ENCODE measurements at regions of chr12 and their contacts with region 1.

Region 1: DNA sequence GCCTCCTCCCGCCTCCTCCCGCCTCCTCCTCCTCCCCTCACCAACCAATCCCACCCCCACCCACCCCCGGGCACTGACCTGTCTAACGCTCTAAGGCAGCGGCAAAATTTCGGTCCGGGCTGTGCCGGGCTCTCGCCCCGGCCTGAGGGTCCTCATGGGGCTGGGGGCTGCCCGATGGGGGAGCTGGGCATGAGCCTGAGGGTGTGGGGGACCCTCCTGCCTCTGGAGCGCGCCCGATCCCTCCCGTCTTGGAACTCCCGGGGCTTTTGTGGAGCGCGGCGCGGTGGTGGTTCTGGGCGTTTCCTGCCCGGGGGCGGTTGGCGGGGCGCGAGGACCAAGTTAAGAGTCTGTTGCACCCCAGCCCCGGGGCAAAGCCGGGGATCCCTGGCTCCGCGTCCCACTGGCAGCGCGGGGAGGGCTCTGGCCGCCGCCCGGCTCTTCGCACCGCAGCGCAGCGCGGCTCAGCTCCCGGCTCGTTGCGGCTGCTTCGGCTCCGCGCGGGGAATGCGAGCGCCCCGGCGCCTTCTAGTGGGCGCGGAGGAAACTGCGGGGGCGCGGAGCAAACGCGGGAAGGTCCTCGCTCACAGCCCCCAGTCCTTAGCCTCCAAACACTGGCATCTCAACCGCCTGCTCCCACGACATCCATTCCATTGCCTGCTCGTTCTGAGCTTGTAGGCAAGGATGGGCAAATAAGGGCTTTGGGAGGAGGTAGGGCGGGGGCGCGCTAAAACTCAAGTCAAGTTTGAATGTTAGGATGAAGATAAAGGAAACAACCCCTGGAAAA is at the start of gene B4GALNT1:
- DNase-seq: peak; percentile 80 to 83 (median 82)
- ATAC-seq: peak; percentile 94
- H3K4me3 ChIP-seq: peak within 1 kb of the TSS; percentile 79
- H3K27ac ChIP-seq: peak within 1 kb of the TSS; percentile 83
- H3K4me1 ChIP-seq: peaks cover 0 to 29% of the 10 kb centered on the region in 2 experiments; a peak in 3 of 5 replicates
- H3K27me3 ChIP-seq: no peaks in the 10 kb centered on the region
- CTCF ChIP-seq: peak; percentile 89 to 95 (median 92)
- EP300 ChIP-seq: no peak
- POLR2A ChIP-seq: peak; percentile 71
- RAD21 ChIP-seq: peak; percentile 66 to 77
- polyA plus RNA-seq, gene B4GALNT1: 1.0 to 1.7 TPM

Region 2: DNA sequence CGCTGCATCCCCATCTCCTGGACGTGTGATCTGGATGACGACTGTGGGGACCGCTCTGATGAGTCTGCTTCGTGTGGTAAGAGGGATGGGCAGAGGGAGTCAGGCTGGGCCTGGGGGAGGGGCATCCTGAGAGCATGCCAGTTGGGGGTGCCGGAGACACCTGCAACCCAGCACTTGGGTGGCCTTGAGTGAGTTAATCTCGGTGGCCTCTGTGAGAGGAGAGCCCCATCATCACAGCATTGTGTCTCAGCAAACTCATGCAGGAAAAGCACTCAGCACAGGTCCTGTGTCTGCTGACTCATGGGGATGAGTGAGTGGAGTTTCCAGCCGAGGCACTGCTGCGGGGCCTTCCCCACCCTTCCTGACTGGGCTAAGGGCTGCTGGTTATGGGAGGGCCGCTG is 465.9 kb before region 1 on chr12:
- CTCF ChIA-PET with region 1: no interaction called
- POLR2A ChIA-PET with region 1: no interaction called
- in situ Hi-C with region 1: no loop called
- intact Hi-C with region 1: no loop called
- DNase-seq: peak; percentile 45 to 57 (median 48)
- ATAC-seq: peak; percentile 69
- H3K4me3 ChIP-seq: no peak overlapping the region
- H3K27ac ChIP-seq: no peak overlapping the region
- H3K4me1 ChIP-seq: peaks cover 0 to 22% of the 10 kb centered on the region in 2 experiments; a peak in 2 of 5 replicates
- H3K27me3 ChIP-seq: peaks cover 13 to 55% of the 10 kb centered on the region in 2 experiments; a peak in 4 of 5 replicates
- CTCF ChIP-seq: no peak
- EP300 ChIP-seq: no peak
- POLR2A ChIP-seq: no peak
- RAD21 ChIP-seq: no peak

Region 3: DNA sequence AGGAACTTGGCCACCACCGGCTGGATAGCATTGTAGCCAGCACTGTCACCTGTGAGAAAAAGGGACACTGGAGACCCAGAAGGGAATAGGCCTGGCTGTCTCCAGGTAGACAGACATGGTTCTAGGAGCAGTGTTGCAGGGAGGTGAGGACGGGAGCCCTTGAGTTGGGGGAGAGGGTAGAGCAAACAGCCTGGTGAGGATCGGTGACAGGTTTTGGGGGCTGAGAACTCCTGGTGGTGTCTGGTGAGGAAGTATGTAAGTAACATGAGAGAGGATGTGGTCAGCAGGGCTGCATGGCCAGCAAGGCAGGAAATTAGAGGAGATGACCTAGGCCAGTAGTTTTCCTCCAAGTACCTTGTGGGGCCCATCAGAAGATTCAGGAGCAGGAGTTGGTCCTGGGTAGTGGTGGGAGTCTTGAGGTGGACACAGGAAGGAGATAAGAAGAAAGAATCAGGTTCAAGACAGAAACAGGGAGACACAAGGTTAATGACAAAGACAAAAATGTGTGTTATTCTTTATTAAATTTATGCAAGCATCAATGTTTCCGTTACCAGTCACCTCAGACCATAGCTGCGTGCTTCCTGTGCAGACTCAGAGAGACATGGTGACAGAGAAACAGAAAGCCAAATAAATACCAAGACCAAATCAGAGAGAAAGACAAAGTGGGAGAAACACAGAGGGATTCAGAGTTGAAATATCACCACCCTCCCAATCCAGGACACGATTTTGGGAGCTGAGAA is 153.3 kb before region 1 on chr12 and contains the start of gene ARHGAP9:
- CTCF ChIA-PET with region 1: no interaction called
- POLR2A ChIA-PET with region 1: no interaction called
- in situ Hi-C with region 1: no loop called
- intact Hi-C with region 1: no loop called
- DNase-seq: no peak
- ATAC-seq: no peak
- H3K4me3 ChIP-seq: no peak within 1 kb of the TSS
- H3K27ac ChIP-seq: peak within 1 kb of the TSS; percentile 61; the same call in 2 of the 3 replicates
- H3K4me1 ChIP-seq: peaks cover 32 to 47% of the 10 kb centered on the region in 2 experiments
- H3K27me3 ChIP-seq: no peaks in the 10 kb centered on the region
- CTCF ChIP-seq: no peak
- EP300 ChIP-seq: no peak
- POLR2A ChIP-seq: no peak
- RAD21 ChIP-seq: no peak
- polyA plus RNA-seq, gene ARHGAP9: 1.5 to 2.0 TPM

Region 4: DNA sequence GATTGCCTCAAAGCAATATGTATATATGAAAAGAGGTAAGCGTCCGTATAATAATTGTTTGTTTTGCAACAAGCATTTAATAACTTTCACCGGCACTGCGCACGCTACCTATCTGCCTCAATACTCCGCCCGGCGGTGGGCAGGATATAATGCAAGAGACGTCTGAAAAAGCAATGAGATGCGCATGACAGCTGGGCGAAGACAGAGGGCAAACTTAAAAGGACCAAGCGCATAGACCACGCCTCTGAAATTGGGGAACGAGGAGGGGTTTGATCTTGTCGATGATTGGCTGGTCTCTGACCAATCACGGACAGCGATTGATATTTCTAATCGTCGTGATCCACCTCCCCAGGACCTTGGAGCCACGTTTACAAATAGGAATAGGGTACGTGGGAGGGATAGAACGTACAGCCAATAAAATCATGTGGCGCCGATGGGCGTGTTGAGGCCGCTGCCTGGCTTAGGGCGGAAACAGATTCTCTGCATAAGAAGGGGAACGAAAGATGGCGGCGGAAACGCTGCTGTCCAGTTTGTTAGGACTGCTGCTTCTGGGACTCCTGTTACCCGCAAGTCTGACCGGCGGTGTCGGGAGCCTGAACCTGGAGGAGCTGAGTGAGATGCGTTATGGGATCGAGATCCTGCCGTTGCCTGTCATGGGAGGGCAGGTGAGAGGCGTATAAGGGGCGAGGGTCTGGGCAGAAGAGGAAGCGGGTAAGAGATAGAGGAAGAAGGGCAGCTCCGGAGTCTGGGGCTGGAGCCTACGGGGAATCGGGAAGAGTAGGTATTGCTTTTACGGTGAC is 61.0 kb after region 1 on chr12 and contains the start of gene OS9:
- CTCF ChIA-PET with region 1: interaction called, 3 read pairs
- POLR2A ChIA-PET with region 1: no interaction called
- in situ Hi-C with region 1: loop called (anchors 5 kb)
- intact Hi-C with region 1: loop called (anchors 1 kb)
- DNase-seq: peak; percentile 99 to 100 (median 99)
- ATAC-seq: peak; percentile 99
- H3K4me3 ChIP-seq: peak within 1 kb of the TSS; percentile 82
- H3K27ac ChIP-seq: peak within 1 kb of the TSS; percentile 80
- H3K4me1 ChIP-seq: peaks cover 4 to 10% of the 10 kb centered on the region in 2 experiments; a peak in 3 of 5 replicates
- H3K27me3 ChIP-seq: no peaks in the 10 kb centered on the region
- CTCF ChIP-seq: peak; percentile 92 to 95 (median 94)
- EP300 ChIP-seq: no peak
- POLR2A ChIP-seq: peak; percentile 95
- RAD21 ChIP-seq: peak; percentile 69 to 70
- polyA plus RNA-seq, gene OS9: 4.6 to 7.9 TPM

Region 5: GRCh38 chr12:57735952-57736740 is 103.3 kb after region 1 on chr12:
- CTCF ChIA-PET with region 1: interaction called, 3 read pairs
- POLR2A ChIA-PET with region 1: no interaction called
- in situ Hi-C with region 1: loop called (anchors 5 kb)
- intact Hi-C with region 1: loop called (anchors 2 kb)
- DNase-seq: peak; percentile 77 to 85 (median 82)
- ATAC-seq: peak; percentile 93
- H3K4me3 ChIP-seq: peak overlapping the region; percentile 38
- H3K27ac ChIP-seq: peak overlapping the region; percentile 11; the same call in 2 of the 3 replicates
- H3K4me1 ChIP-seq: peaks cover 9 to 31% of the 10 kb centered on the region in 2 experiments; a peak in 4 of 5 replicates
- H3K27me3 ChIP-seq: peaks cover 20 to 59% of the 10 kb centered on the region in 2 experiments
- CTCF ChIP-seq: peak; percentile 71 to 79 (median 79)
- EP300 ChIP-seq: no peak
- POLR2A ChIP-seq: no peak
- RAD21 ChIP-seq: peak; percentile 66 to 78